ENCODE measurements at regions of chr1 and their contacts with region 1.

Region 1: DNA sequence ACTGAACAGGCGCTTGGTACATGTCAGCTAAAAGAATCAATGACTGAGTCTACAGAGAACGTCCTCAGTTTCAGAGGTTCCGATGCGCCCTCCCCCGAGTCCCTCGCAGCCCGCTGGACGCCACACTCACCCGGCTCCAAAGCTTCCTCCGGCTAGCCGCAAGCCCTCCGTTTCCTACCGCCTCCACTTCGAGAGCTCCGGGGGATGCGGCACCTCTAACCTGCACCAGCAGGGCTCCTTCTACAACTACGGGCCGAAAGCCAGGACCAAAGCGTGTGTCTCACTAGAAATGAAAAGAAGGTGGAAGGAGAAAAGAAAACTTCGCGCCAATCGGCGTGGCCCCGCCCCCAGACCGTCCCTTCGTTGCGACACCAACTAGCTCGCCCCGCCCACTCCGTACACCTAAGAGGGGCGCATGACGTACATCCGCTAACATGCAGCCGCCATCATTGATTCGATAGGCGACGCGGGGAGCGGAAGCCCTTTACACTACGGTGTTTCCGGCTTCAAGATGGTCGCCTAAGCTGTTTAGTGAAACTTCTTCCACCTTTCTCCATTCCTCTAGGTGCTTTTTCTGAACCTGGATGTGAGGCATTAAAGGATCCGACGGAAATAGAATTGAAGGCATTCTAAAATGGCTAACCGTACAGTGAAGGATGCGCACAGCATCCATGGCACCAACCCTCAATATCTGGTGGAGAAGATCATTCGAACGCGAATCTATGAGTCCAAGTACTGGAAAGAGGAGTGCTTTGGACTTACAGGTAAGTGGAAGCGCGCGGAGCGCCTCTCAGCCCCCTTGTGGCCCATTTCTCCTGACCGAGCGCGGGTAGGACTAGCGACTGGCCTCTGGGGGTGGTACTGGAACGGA is at the starts of genes ORC1 and PRPF38A:
- DNase-seq: peak; percentile 98
- H3K4me3 Mint-ChIP-seq: peak within 1 kb of the TSS; percentile 100
- H3K27ac Mint-ChIP-seq: peak within 1 kb of the TSS; percentile 100
- H3K4me1 Mint-ChIP-seq: peaks cover 67% of the 10 kb centered on the region
- H3K27me3 Mint-ChIP-seq: no peaks in the 10 kb centered on the region
- total RNA-seq, gene ORC1: 27.0 to 28.3 TPM
- total RNA-seq, gene PRPF38A: 84.1 to 86.5 TPM

Region 2: DNA sequence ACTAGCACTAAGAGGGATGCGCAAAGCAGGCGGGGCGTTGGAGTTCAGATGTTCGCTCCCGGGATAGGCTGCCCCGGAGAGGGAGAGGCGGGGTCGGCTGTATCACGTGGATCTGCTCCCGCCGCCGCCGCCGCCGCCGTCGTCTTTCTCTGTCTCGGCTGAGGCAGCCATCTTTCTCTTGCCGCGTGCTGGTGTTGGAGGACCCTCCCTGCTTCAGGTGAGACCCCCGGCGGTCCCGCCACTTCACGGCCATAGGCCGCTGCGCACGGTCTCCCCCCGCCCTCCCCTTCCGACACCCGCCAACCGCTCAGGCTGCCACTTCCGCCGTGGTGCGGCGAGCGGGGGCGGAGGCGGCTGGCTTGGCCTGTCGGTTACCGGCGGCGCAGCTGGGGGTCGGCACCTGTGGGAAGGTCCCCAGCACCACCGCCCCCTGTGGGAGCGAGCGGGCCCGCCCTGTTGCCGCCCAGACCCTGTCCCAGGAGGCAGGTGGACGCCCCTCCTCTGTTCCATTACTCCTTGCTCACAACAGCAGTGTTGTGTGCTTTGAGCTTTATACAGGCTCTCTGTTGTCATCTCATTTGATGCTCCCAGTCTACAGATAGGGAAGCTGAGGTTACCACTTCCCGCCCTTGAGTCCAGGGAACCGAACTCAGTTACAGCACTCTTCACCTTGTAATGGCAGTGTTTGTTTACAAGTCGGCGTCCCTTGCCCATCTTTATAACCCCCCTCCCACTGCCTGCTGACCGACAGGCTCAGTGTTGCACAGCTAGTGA is 348.0 kb before region 1 on chr1 and contains the start of gene BTF3L4:
- CTCF ChIA-PET with region 1: no interaction called
- POLR2A ChIA-PET with region 1: interaction called, 20 read pairs
- DNase-seq: peak; percentile 96
- H3K4me3 Mint-ChIP-seq: peak within 1 kb of the TSS; percentile 88
- H3K27ac Mint-ChIP-seq: peak within 1 kb of the TSS; percentile 94
- H3K4me1 Mint-ChIP-seq: peaks cover 61% of the 10 kb centered on the region
- H3K27me3 Mint-ChIP-seq: no peaks in the 10 kb centered on the region
- total RNA-seq, gene BTF3L4: 35.0 to 38.1 TPM

Region 3: DNA sequence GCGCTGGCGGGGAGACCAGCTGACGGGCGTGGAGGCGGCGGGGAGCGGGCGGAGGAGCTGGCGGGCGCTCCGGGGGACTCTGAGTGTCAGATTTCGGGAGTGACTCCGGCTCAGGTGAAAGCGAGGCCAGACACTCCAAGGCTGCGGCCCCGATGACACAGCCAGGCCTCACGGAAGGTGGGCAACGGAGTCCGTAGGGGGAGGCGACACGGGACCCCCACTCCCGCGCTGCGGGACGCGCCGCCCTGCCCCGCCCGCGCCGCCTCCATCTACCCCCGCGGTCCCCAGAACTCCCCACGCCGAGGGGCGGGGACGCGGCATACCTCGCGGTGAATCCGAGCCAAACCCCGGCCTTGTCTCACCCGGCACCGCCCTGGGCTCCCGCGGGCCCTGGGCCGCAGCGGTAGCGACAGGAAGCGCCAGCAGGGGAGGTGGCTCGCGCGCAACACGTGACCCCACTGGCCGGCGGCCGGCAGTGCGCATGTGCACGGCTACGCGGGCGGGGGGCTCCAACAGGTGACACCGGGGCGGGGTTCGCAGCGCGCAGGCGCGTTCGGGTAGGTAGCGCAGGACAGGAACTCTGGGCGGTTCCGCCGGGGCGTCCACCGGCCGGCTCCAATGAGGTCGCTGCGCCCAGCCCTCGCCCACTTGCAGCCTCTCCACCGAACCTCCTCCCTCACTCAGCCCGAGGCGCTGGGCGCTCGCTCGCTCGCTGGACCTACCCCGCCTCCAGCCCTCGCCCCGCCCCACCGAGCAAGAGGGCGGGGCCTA is 38.4 kb before region 1 on chr1 and contains the start of gene CC2D1B:
- CTCF ChIA-PET with region 1: interaction called, 4 read pairs
- POLR2A ChIA-PET with region 1: interaction called, 71 read pairs
- DNase-seq: peak; percentile 100
- H3K4me3 Mint-ChIP-seq: peak within 1 kb of the TSS; percentile 97
- H3K27ac Mint-ChIP-seq: peak within 1 kb of the TSS; percentile 96
- H3K4me1 Mint-ChIP-seq: peaks cover 46% of the 10 kb centered on the region
- H3K27me3 Mint-ChIP-seq: no peaks in the 10 kb centered on the region
- total RNA-seq, gene CC2D1B: 43.8 to 46.9 TPM

Region 4: DNA sequence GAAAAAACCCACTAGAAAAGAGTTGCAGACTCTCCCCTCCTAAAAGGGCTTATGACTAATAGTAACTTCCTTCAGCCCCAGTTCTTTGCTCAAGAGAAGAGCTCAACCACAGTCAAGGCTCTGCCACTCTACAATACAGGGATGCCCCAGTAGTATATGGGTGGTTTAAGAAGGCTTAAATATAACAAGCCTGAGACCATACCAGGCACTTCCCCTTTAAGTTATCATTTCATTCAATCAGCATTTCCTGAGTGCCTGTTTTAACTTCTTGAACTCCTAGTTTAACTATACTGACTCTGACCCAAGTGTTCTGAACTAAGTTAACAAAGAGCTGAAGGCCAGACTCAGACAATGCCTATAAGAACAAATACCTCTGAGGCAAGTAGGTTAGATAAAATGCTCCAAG is 19.9 kb after region 1 on chr1:
- CTCF ChIA-PET with region 1: interaction called, 24 read pairs
- POLR2A ChIA-PET with region 1: interaction called, 144 read pairs
- DNase-seq: peak; percentile 41
- H3K4me3 Mint-ChIP-seq: peak overlapping the region; percentile 59
- H3K27ac Mint-ChIP-seq: peak overlapping the region; percentile 97
- H3K4me1 Mint-ChIP-seq: peaks cover 43% of the 10 kb centered on the region
- H3K27me3 Mint-ChIP-seq: no peaks in the 10 kb centered on the region

Region 5: DNA sequence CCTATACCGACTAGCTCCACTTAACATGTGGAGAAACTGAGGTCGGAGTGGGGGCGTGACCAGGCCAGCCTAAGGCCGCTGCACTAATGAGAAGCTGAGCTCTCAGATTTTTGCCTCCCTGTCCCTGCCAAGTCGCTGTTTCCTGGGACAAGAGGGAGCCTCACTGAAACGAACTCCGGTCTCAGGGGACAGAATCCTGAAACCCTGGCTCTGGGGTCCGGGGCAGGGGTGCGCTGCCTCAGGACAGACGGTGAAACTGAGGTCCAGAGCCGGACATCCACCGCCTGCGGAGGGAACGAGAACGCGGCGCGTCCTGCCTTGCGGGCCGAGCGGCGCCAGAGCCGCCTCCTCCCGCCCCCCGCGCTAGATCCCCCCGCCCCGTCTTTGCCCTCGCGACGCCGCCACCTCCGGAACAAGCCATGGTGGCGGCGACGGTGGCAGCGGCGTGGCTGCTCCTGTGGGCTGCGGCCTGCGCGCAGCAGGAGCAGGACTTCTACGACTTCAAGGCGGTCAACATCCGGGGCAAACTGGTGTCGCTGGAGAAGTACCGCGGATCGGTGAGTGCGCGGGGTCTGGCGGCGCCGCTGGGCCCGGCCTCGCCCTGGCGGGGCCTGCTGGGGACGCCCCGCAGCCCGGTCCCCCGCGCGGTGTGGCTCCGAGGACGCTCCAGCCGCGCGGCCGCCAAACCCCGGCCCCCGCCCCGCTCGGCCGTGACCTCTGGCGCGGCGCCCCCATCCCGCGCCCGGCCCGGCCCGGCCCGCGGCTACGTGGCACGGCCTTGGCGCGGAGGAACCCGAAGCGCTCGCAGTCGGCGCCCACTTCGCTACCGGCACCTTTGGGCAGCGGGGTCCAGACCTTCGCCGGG is 197.9 kb after region 1 on chr1 and contains the start of gene GPX7:
- CTCF ChIA-PET with region 1: interaction called, 5 read pairs
- POLR2A ChIA-PET with region 1: interaction called, 16 read pairs
- DNase-seq: peak; percentile 68
- H3K4me3 Mint-ChIP-seq: peak within 1 kb of the TSS; percentile 86
- H3K27ac Mint-ChIP-seq: peak within 1 kb of the TSS; percentile 85
- H3K4me1 Mint-ChIP-seq: peaks cover 35% of the 10 kb centered on the region
- H3K27me3 Mint-ChIP-seq: no peaks in the 10 kb centered on the region
- total RNA-seq, gene GPX7: 21.2 to 23.5 TPM

Region 6: DNA sequence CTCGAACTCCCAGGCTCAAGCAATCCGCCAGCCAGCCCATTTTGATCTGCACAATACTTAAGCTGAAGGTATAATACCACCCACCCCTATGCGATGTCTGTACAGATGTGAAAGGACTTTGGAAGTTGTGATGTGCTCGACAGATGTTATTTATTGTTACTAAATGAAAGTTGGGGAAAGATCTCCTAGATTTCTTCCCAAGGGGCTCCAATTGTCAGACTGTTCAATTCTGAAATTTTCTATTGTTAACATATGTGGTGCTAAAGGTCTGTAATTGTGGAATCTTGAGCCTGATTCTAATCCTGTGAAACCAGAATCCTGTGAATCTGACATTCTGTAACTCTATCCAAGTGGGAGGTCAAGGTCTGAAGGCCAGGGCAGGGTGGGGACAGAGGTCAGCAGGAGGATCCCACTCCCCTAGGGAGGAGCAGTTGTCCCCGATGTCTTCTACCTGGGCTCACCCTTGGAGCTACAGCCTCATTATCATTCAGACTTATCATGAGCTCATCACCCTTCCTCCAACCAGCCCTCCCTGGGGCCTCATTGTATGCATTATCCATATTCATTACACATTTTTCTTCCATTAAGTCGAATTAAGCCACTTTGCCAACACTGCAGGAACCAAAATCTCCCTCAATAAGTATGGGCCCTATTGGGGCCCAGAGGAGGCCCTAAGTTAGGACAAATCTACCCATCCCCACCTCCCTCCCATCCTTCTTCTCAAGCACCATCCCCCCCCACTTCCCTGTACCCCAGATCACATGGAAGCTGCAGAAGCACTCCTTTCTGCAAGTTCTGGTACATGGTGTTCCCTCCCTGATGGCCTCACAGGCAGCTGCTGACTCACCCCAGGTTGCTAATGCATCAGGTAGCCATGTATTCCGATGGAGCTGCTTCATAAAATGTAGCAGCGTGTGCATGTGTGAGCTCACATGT is 260.9 kb after region 1 on chr1:
- CTCF ChIA-PET with region 1: interaction called, 15 read pairs
- POLR2A ChIA-PET with region 1: interaction called, 8 read pairs
- DNase-seq: no peak
- H3K4me3 Mint-ChIP-seq: no peak overlapping the region
- H3K27ac Mint-ChIP-seq: no peak overlapping the region
- H3K4me1 Mint-ChIP-seq: no peaks in the 10 kb centered on the region
- H3K27me3 Mint-ChIP-seq: no peaks in the 10 kb centered on the region

Region 7: GRCh38 chr1:52726265-52727113 is 322.1 kb after region 1 on chr1 and contains the start of gene ZYG11B:
- CTCF ChIA-PET with region 1: no interaction called
- POLR2A ChIA-PET with region 1: interaction called, 10 read pairs
- DNase-seq: peak; percentile 92
- H3K4me3 Mint-ChIP-seq: peak within 1 kb of the TSS; percentile 93
- H3K27ac Mint-ChIP-seq: peak within 1 kb of the TSS; percentile 53
- H3K4me1 Mint-ChIP-seq: peaks cover 34% of the 10 kb centered on the region
- H3K27me3 Mint-ChIP-seq: peaks cover 7% of the 10 kb centered on the region
- total RNA-seq, gene ZYG11B: 12.7 to 12.8 TPM

Measured in activated CD4-positive, alpha-beta memory T cell treated with anti-CD3 and anti-CD28 coated beads, Interleukin-2, amount 10 ng/mL, durations not matched to agents 7 days and 5 days (primary cell).